CD8-positive, alpha-beta memory T cell (primary cell): ENCODE measurements at regions of chr17 and their contacts with region 1.

Region 1: DNA sequence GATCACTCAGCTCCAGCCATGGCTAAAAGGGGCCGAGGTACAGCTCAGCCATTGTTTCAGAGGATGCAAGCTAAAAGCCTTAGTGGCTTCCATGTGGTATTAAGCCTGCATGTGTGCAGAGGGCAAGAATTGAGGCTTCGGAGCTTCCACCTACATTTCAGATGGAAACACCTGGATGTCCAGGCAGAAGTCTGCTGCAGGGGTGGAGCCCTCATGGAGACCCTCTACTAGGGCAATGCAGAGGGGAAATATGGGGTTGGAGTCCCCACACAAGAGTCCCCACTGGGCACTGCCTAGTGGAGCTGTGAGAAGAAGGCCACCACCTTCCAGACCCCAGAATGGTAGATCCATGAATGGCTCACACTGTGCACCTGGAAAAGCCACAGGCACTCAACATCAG is 14.7 kb upstream of the PSMD11 start:
- DNase-seq: no peak
- H3K4me3 ChIP-seq: no peak overlapping the region
- H3K4me3 Mint-ChIP-seq: no peak overlapping the region
- H3K27ac ChIP-seq: no peak overlapping the region
- H3K27ac Mint-ChIP-seq: no peak overlapping the region
- H3K4me1 ChIP-seq: no peaks in the 10 kb centered on the region
- H3K4me1 Mint-ChIP-seq: no peaks in the 10 kb centered on the region
- H3K27me3 ChIP-seq: no peaks in the 10 kb centered on the region
- H3K27me3 Mint-ChIP-seq: no peaks in the 10 kb centered on the region

Region 2: DNA sequence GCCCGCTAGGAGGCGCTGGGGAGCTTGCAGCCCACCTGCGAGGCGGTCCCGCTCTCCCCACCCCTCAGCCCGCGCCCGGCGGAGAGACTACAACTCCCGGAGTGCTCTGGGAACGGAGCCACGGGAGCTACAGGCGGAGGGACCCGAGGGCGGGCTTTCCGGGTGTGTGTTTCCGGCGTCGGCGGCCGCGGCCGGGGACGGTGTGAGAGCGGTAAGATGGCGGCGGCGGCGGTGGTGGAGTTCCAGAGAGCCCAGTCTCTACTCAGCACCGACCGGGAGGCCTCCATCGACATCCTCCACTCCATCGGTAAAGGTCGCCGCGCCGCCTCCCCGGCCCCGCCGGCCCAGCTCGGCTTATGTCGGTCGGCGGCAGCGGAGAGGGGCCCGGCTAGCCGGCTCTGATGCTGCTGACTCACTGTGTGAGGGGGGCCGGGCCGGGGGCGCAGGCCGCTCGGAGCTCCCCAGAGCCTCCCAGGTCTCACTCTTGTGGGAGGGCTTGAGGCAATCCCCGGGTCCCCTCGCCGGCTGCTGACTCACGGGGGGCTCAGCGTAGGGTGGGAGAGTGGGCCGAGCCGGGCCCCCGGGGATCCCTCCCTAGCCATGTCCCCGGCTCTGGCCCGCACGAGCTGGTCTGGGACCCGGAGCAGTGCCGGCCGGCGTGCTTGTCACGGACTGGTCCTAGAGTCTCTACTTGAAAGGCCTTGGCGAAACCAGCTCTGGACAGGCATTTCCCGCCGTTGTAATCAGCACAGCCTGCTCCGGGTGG is 14.9 kb after region 1 on chr17 and contains the start of gene PSMD11:
- CTCF ChIA-PET with region 1: interaction called, 14 read pairs
- POLR2A ChIA-PET with region 1: interaction called, 3 read pairs
- DNase-seq: peak; percentile 98 to 99 (median 99)
- H3K4me3 ChIP-seq: peak within 1 kb of the TSS; percentile 85
- H3K4me3 Mint-ChIP-seq: peak within 1 kb of the TSS; percentile 78 to 92 (median 89)
- H3K27ac ChIP-seq: peak within 1 kb of the TSS; percentile 76
- H3K27ac Mint-ChIP-seq: peak within 1 kb of the TSS; percentile 66 to 95 (median 84)
- H3K4me1 ChIP-seq: peaks cover 27% of the 10 kb centered on the region
- H3K4me1 Mint-ChIP-seq: peaks cover 34 to 40% (median 39%) of the 10 kb centered on the region in 3 donors
- H3K27me3 ChIP-seq: no peaks in the 10 kb centered on the region
- H3K27me3 Mint-ChIP-seq: peaks cover 0 to 4% of the 10 kb centered on the region in 2 donors
- total RNA-seq, gene PSMD11: 175 to 187 TPM

Region 3: DNA sequence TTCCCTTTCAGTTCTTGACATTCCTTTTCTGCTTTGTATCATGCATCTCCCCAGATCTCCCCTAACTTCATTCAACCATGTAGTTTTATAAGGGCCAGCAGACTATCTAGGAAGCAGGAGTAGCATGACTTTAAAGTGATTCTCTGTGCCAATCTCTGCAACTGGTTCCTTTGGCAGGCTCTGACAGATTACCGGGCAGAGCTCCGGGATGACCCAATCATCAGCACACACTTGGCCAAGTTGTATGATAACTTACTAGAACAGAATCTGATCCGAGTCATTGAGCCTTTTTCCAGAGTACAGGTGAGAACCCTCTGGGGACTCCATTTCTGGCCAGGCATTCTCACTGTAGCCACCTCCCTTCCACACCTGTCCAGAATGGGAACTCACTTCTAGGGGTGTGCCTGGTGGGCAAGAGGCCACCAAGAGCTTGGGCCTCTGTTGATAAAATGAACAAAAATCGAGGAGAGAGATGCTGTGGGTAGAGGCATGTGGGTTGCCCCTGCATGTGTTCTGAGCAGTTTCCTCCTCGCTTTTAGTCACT is 49.5 kb after region 1 on chr17:
- CTCF ChIA-PET with region 1: no interaction called
- POLR2A ChIA-PET with region 1: no interaction called
- DNase-seq: no peak
- H3K4me3 ChIP-seq: no peak overlapping the region
- H3K4me3 Mint-ChIP-seq: no peak overlapping the region
- H3K27ac ChIP-seq: no peak overlapping the region
- H3K27ac Mint-ChIP-seq: peak overlapping the region in 2 of 8 donors; percentile 65
- H3K4me1 ChIP-seq: no peaks in the 10 kb centered on the region
- H3K4me1 Mint-ChIP-seq: peaks cover 0 to 1% (median 0%) of the 10 kb centered on the region in 3 donors
- H3K27me3 ChIP-seq: no peaks in the 10 kb centered on the region
- H3K27me3 Mint-ChIP-seq: peaks cover 0 to 1% of the 10 kb centered on the region in 2 donors